AG04449 (cell line): ENCODE measurements at regions of chr3 and their contacts with region 1.

Region 1: DNA sequence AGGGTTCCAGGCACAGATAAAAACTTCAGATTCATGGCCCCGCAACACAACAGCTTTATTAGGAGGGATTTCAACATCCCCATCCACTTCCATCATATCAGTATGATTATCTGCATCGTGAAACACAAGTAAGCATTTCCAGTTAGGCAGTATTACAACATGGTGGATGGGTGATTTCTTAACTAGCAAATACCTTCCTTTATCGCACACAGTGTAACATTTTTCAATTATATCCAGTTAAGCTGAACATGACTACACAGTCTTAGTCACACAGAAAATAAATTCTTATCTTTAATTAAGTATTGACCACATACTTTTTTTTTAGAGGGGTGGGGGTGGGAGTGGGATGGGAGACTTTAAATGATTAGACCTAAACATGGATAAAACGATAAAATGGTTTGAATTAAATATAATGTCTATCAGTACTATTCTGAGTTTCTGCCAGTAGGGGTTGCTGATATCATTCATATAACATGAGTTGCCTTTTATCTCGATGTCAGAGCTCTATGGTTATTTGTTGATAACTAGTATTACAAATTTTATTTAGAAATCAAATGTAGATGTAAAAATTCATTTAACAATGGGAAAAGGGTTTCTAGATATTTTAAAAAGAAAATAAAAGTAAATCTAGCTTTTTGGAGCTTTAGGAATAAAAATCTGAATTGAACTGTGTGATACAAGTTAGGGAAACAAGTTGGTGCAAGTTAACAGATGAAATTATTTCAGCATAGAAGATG is 146.6 kb downstream of the TBL1XR1 start:
- DNase-seq: no peak
- H3K4me3 ChIP-seq: no peak overlapping the region
- CTCF ChIP-seq: peak; percentile 38

Region 2: GRCh38 chr3:177069514-177070329 is 19.1 kb after region 1 on chr3:
- CTCF ChIA-PET with region 1: no interaction called
- POLR2A ChIA-PET with region 1: no interaction called
- DNase-seq: peak; percentile 12
- H3K4me3 ChIP-seq: no peak overlapping the region
- CTCF ChIP-seq: no peak

Region 3: DNA sequence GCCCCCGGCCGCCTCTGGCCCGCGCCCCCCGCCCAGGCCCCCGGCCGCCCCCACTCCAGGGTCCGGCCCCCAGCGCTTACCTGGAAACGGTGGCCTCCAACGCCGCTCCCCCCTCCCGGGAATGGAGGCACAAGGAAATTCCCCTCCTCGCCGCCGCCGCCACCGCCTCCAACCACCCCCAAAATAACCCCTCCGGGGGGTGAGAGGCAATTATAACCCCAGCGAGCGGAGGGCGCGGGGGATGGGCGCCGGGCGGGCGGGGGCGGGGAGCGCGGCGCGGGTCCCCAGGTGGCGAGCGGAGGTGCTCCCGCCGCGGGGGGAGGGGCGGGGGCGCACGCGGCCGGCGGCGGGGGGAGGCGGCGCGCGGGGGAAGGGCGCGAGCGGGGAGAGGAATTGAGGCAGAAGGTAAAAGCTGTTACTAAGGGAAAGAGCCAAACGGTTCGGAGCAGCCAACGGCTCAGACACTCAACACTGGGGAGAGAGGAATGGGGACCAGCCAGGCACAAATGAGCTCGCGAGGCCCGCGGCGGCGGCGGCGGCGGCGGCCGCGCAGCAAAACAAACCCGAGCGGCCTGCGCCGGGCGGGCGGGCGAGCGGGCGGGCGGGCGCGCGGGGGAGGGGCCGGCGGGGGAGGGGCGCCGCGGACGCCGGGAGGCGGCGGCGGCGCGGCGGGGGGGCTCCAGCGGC is 146.5 kb after region 1 on chr3 and contains the start of gene TBL1XR1:
- CTCF ChIA-PET with region 1: interaction called, 14 read pairs
- POLR2A ChIA-PET with region 1: no interaction called
- DNase-seq: peak; percentile 57
- H3K4me3 ChIP-seq: peak within 1 kb of the TSS; percentile 90
- CTCF ChIP-seq: no peak

Region 4: DNA sequence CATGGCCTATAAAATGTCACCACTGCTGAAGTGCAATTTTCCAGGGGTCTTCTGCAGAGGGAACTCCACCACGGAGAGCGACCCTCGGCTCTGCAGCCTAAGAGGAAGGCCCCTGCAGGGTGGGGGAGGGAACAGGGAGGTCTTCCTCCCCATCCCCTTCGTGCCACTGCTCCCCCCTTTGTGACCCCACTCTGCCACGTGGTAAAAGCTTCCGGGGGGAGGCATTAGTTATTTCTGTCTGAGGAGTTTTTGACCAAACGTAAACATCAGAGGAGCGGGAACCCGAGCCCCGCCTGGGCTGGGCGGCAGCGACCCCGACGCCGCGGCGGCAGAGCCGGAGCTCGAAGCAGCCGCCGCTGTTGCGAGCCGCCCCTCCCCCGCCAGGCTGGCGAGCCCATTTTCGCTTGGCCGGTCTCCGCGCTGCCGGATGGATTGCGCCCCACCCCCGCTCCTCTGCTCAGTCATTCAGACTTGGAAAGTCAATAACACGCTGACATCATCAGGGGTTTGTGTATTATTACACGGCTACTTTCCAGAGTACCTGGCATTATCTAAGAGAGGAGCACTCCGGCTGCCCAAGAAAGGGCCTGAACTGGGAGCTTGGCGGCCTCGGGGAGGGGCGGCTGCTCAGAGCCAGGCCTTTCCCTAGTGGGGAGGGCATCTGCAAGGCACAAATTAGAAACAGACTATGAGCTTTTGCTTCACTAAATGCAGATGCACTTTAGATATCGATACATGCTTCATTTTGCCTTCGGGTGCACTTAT is 309.1 kb after region 1 on chr3:
- CTCF ChIA-PET with region 1: interaction called, 10 read pairs
- POLR2A ChIA-PET with region 1: no interaction called
- DNase-seq: peak; percentile 96
- H3K4me3 ChIP-seq: peak overlapping the region; percentile 40
- CTCF ChIP-seq: peak; percentile 6

Region 5: GRCh38 chr3:177777699-177778098 is 727.0 kb after region 1 on chr3:
- CTCF ChIA-PET with region 1: interaction called, 11 read pairs
- POLR2A ChIA-PET with region 1: no interaction called
- DNase-seq: no peak
- H3K4me3 ChIP-seq: no peak overlapping the region
- CTCF ChIP-seq: peak; percentile 54

Region 6: GRCh38 chr3:178385280-178385952 is 1334.7 kb after region 1 on chr3:
- CTCF ChIA-PET with region 1: interaction called, 15 read pairs
- POLR2A ChIA-PET with region 1: no interaction called
- DNase-seq: no peak
- H3K4me3 ChIP-seq: no peak overlapping the region
- CTCF ChIP-seq: peak; percentile 50